Dorsolateral prefrontal cortex (tissue), 120 donors: ENCODE measurements at regions of chr14 and their contacts with region 1.

Region 1: GRCh38 chr14:103104654-103105452 is 10.3 kb downstream of the EXOC3L4 start:
- DNase-seq: peak in 7 of 10 donors; percentile 48 to 79 (median 58)
- H3K4me3 ChIP-seq: peak overlapping the region in 38 of 59 donors; percentile 10 to 52 (median 36)
- H3K27ac ChIP-seq: no peak overlapping the region
- H3K27me3 ChIP-seq: peaks cover 0 to 44% (median 34%) of the 10 kb centered on the region in 45 donors
- CTCF ChIP-seq: peak; percentile 61 to 98 (median 93)

Region 2: DNA sequence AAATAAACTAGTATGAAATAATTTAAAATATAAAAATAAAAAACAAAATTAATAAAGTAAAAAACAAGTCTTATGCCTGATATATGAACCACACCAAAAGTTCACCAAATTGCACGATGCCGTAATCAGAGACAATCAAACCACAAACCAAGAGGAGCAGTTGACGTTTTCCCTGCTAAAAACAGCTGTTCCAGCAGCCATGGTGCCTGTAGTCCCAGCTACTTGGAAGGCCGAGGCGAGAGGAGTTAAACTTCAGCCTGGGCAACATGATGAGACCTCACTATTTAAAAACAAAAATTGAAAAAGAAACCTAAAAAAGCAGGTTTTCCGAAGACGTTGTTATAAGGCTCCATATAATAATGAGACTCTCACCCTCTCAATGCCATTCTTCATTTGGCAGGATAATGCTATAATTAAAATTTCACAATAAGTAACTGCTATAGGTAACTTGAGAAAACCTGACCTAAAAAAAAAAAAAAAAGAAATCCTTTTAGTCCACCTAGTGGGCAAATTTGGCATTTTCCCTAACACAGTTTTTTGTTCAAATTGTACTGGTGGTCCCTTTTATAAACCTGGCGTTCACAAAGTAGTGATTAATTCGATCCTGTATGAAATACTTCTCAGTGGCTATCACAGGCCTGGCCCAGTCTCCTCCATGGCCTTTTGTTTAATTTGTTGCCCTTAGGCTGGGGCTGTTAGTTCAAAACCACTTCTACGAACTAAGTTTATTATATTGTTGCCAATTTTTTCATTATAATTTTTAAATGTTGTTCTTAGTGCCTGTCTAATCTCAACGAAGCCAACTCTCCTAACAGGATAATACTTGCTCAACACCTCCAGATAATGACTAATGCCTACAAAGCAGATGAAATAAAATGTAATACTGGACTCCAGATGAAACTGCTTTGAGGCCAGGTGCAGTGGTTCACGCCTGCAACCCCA is 80.5 kb after region 1 on chr14:
- intact Hi-C with region 1: loop called (anchors 2 to 5 kb)
- DNase-seq: no peak
- H3K4me3 ChIP-seq: no peak overlapping the region
- H3K27ac ChIP-seq: no peak overlapping the region
- H3K27me3 ChIP-seq: peaks cover 0 to 50% (median 31%) of the 10 kb centered on the region in 45 donors
- CTCF ChIP-seq: peak; percentile 57 to 87 (median 71)